Naive thymus-derived CD4-positive, alpha-beta T cell (primary cell): ENCODE measurements at regions of chr4 and their contacts with region 1.

Region 1: GRCh38 chr4:108433832-108434231 is 186.5 kb upstream of the RPL34 start:
- DNase-seq: peak in 8 of 9 donors; percentile 48 to 83 (median 72)
- ATAC-seq: peak; percentile 81
- H3K4me3 ChIP-seq: peak overlapping the region; percentile 55
- H3K4me3 Mint-ChIP-seq: peak overlapping the region; percentile 14 to 78 (median 66)
- H3K27ac ChIP-seq: peak overlapping the region; percentile 21
- H3K27ac Mint-ChIP-seq: peak overlapping the region; percentile 70 to 92 (median 86)
- H3K4me1 ChIP-seq: peaks cover 18 to 35% of the 10 kb centered on the region in 2 donors
- H3K4me1 Mint-ChIP-seq: peaks cover 26 to 86% (median 64%) of the 10 kb centered on the region in 7 donors
- H3K27me3 ChIP-seq: no peaks in the 10 kb centered on the region
- H3K27me3 Mint-ChIP-seq: peaks cover 0 to 2% (median 0%) of the 10 kb centered on the region in 5 donors

Region 2: DNA sequence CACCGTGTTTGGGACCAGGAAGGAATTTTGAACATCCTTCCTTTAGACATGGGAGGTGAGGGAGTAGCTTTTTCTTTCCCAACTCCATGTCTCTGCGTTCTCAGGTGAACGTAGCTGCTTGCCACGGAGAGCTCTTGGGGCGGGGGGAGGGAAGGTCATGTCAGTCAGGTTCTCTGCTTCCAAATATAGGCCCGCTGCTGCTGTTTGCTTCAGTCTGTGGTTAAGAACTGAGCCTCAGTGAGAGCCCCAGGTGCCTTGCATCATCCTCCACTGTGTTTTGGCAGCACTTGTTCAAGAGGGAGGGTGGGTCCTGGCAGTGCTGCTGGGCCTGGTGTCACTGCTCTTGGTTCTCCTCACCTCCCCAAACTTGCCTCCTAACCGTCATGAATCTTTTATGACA is 397.6 kb before region 1 on chr4:
- CTCF ChIA-PET with region 1: no interaction called
- POLR2A ChIA-PET with region 1: interaction called, 3 read pairs
- intact Hi-C with region 1: loop called in 1 of 2 experiments (anchors 5 kb)
- DNase-seq: peak in 8 of 9 donors; percentile 43 to 93 (median 88)
- ATAC-seq: peak; percentile 99
- H3K4me3 ChIP-seq: peak overlapping the region; percentile 41
- H3K4me3 Mint-ChIP-seq: peak overlapping the region; percentile 73 to 87 (median 80)
- H3K27ac ChIP-seq: peak overlapping the region; percentile 78
- H3K27ac Mint-ChIP-seq: peak overlapping the region; percentile 90 to 100 (median 96)
- H3K4me1 ChIP-seq: peaks cover 0 to 55% of the 10 kb centered on the region in 2 donors
- H3K4me1 Mint-ChIP-seq: peaks cover 19 to 81% (median 66%) of the 10 kb centered on the region in 7 donors
- H3K27me3 ChIP-seq: no peaks in the 10 kb centered on the region
- H3K27me3 Mint-ChIP-seq: no peaks in the 10 kb centered on the region

Region 3: DNA sequence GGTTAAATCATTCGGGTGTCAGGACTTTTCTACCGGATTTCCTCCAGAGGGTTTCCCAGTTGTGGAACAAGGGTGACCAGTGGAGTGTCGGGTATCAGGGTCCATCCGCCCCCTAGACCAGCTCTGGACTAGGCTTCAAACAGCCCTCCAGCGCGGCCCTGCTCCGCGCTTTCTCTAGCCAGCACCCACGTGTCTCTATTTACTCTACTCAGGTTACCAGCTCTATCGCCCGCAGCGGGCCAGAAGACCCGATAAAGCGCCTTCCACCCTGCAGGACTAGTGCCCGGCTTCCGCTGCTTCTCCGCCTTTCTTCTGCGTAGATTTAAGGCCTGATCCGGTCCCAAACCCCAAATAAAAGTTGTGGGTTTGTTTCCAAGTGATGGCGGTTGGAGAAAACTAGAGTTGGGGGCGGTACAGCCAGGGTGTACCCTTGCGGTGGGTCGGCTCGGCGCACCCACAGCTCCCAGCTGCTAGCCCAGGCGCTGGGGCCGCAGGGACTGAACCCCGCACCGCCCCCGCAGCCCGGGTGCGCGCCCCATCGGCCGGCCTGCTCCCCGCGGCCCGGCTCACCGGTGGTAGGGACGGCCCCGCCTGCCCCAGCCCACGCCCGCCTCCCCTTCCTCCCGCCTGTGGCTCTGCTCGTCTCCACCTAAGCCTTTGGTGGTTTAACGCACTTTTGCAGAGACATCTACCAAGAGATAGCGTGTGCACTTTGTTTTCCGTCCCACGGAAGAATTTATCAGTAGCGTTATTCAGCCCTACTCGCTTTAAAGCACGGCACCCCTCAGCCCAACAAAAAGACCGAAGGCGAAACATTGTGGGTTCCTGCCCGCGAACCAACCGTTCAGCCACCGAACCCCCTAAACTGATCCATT is 267.2 kb before region 1 on chr4:
- CTCF ChIA-PET with region 1: no interaction called
- POLR2A ChIA-PET with region 1: interaction called, 3 read pairs
- intact Hi-C with region 1: loop called in 1 of 2 experiments (anchors 2 kb)
- DNase-seq: peak; percentile 38 to 89 (median 70)
- ATAC-seq: peak; percentile 41
- H3K4me3 ChIP-seq: peak overlapping the region; percentile 77
- H3K4me3 Mint-ChIP-seq: peak overlapping the region; percentile 89 to 100 (median 98)
- H3K27ac ChIP-seq: peak overlapping the region; percentile 87
- H3K27ac Mint-ChIP-seq: peak overlapping the region; percentile 90 to 98 (median 97)
- H3K4me1 ChIP-seq: peaks cover 8 to 13% of the 10 kb centered on the region in 2 donors
- H3K4me1 Mint-ChIP-seq: peaks cover 13 to 46% (median 25%) of the 10 kb centered on the region in 7 donors
- H3K27me3 ChIP-seq: no peaks in the 10 kb centered on the region
- H3K27me3 Mint-ChIP-seq: peaks cover 0 to 33% (median 0%) of the 10 kb centered on the region in 5 donors

Region 4: DNA sequence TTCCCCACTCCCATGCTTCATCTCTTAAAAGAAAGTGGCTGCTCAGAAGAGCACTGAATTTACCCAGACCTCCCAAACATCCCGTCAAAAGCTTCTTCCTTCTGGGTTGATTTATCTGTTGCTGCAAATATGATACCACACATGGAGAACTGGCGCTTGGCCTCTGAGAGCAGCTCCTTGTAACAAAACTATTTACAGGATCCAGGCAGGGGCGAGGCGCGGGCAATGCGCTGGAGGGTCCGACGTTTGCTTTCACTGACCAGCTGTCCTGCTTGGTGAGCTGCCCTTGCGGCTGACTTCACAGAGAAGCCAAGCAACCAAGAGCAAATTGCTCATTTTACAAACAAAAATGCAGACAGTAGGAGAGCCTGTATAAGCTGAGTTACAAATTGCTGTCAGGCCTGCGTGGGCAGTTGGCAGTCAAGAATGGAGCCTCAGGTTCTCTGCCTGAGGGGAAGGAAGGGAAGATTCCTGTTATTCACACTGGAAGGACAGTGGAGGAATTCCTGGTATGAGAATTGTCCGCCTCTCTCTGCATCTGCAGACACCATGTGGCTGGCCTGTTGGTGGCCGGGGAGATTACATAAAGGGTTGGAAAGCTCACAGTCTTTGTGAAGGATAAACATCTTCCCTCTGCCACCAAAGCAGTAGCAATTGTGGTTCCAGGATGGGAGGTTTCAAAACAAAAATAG is 72.9 kb before region 1 on chr4:
- CTCF ChIA-PET with region 1: no interaction called
- POLR2A ChIA-PET with region 1: no interaction called
- intact Hi-C with region 1: loop called (anchors 1 kb)
- DNase-seq: peak in 1 of 9 donors; percentile 9
- ATAC-seq: no peak
- H3K4me3 ChIP-seq: no peak overlapping the region
- H3K4me3 Mint-ChIP-seq: peak overlapping the region; percentile 8 to 82 (median 69)
- H3K27ac ChIP-seq: no peak overlapping the region
- H3K27ac Mint-ChIP-seq: peak overlapping the region; percentile 43 to 96 (median 91)
- H3K4me1 ChIP-seq: peaks cover 15 to 58% of the 10 kb centered on the region in 2 donors
- H3K4me1 Mint-ChIP-seq: peaks cover 34 to 77% (median 74%) of the 10 kb centered on the region in 7 donors
- H3K27me3 ChIP-seq: no peaks in the 10 kb centered on the region
- H3K27me3 Mint-ChIP-seq: peaks cover 0 to 14% (median 0%) of the 10 kb centered on the region in 5 donors

Region 5: GRCh38 chr4:108446556-108446955 is 12.7 kb after region 1 on chr4:
- CTCF ChIA-PET with region 1: no interaction called
- POLR2A ChIA-PET with region 1: no interaction called
- intact Hi-C with region 1: loop called in 1 of 2 experiments (anchors 1 kb)
- DNase-seq: no peak
- ATAC-seq: no peak
- H3K4me3 ChIP-seq: no peak overlapping the region
- H3K4me3 Mint-ChIP-seq: no peak overlapping the region
- H3K27ac ChIP-seq: no peak overlapping the region
- H3K27ac Mint-ChIP-seq: peak overlapping the region in 1 of 9 donors; percentile 28
- H3K4me1 ChIP-seq: peaks cover 0 to 8% of the 10 kb centered on the region in 2 donors
- H3K4me1 Mint-ChIP-seq: peaks cover 9 to 50% (median 40%) of the 10 kb centered on the region in 7 donors
- H3K27me3 ChIP-seq: no peaks in the 10 kb centered on the region
- H3K27me3 Mint-ChIP-seq: peaks cover 0 to 8% (median 0%) of the 10 kb centered on the region in 5 donors

Region 6: GRCh38 chr4:108473221-108473620 is 39.4 kb after region 1 on chr4:
- CTCF ChIA-PET with region 1: no interaction called
- POLR2A ChIA-PET with region 1: no interaction called
- intact Hi-C with region 1: loop called in 1 of 2 experiments (anchors 1 kb)
- DNase-seq: peak in 4 of 9 donors; percentile 17 to 43 (median 22)
- ATAC-seq: peak; percentile 40
- H3K4me3 ChIP-seq: no peak overlapping the region
- H3K4me3 Mint-ChIP-seq: no peak overlapping the region
- H3K27ac ChIP-seq: no peak overlapping the region
- H3K27ac Mint-ChIP-seq: peak overlapping the region in 2 of 9 donors; percentile 25 to 31
- H3K4me1 ChIP-seq: peaks cover 0 to 7% of the 10 kb centered on the region in 2 donors
- H3K4me1 Mint-ChIP-seq: peaks cover 11 to 65% (median 58%) of the 10 kb centered on the region in 7 donors
- H3K27me3 ChIP-seq: no peaks in the 10 kb centered on the region
- H3K27me3 Mint-ChIP-seq: no peaks in the 10 kb centered on the region